ENCODE measurements at regions of chr12 and their contacts with region 1.

Region 1: GRCh38 chr12:68317047-68317667 is 15.0 kb downstream of the MDM1 start:
- DNase-seq: peak in 1 of 2 donors; percentile 78
- H3K4me3 ChIP-seq: no peak overlapping the region
- H3K27ac ChIP-seq: no peak overlapping the region
- H3K4me1 ChIP-seq: peaks cover 0 to 21% (median 2%) of the 10 kb centered on the region in 4 donors
- H3K27me3 ChIP-seq: no peaks in the 10 kb centered on the region
- CTCF ChIP-seq: peak in 5 of 7 experiments; percentile 41 to 66 (median 58)
- EP300 ChIP-seq: no peak
- POLR2A ChIP-seq: no peak

Region 2: GRCh38 chr12:68040450-68041075 is 276.6 kb before region 1 on chr12:
- intact Hi-C with region 1: loop called (anchors 5 kb)
- DNase-seq: peak; percentile 71 to 87
- H3K4me3 ChIP-seq: no peak overlapping the region
- H3K27ac ChIP-seq: no peak overlapping the region
- H3K4me1 ChIP-seq: no peaks in the 10 kb centered on the region
- H3K27me3 ChIP-seq: no peaks in the 10 kb centered on the region
- CTCF ChIP-seq: peak in 5 of 7 experiments; percentile 47 to 87 (median 75)
- EP300 ChIP-seq: no peak
- POLR2A ChIP-seq: no peak

Region 3: DNA sequence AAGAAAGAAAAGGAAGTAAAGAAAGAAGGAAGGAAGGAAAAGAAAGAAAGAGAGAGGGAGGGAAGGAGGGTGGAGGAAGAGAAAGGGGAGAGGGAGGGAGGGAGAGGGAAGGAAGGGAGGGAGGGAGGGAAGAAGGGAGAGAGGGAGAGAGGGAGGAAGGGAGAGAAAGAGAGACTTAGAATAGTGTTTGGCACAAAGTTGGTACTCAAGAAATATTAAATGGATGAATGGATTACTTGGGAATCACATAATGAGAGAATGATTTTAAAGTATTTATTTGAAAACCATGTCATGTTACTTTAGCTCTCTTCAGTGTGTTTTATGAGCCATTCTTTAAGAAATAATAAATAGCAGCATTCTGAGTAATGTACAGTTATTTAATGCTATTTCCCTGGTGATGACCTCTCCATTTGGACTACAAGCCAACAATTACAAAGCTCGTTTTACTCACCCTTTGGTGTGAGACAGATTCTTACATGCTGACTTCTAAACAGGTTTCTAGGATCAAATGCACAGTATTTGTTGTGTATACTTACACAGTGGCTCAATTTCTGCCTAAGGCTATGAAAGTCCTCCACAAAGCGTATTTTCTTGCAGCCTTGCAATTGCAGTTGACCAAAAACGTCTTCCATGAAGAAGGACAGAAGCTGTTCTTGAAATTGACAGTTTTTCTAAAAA is 92.4 kb before region 1 on chr12:
- intact Hi-C with region 1: loop called (anchors 5 kb)
- DNase-seq: no peak
- H3K4me3 ChIP-seq: no peak overlapping the region
- H3K27ac ChIP-seq: no peak overlapping the region
- H3K4me1 ChIP-seq: peaks cover 0 to 16% (median 13%) of the 10 kb centered on the region in 4 donors
- H3K27me3 ChIP-seq: no peaks in the 10 kb centered on the region
- CTCF ChIP-seq: no peak
- EP300 ChIP-seq: no peak
- POLR2A ChIP-seq: no peak

Measured in stomach (tissue), 19 donors.